ENCODE measurements at regions of chr16 and their contacts with region 1.

Region 1: DNA sequence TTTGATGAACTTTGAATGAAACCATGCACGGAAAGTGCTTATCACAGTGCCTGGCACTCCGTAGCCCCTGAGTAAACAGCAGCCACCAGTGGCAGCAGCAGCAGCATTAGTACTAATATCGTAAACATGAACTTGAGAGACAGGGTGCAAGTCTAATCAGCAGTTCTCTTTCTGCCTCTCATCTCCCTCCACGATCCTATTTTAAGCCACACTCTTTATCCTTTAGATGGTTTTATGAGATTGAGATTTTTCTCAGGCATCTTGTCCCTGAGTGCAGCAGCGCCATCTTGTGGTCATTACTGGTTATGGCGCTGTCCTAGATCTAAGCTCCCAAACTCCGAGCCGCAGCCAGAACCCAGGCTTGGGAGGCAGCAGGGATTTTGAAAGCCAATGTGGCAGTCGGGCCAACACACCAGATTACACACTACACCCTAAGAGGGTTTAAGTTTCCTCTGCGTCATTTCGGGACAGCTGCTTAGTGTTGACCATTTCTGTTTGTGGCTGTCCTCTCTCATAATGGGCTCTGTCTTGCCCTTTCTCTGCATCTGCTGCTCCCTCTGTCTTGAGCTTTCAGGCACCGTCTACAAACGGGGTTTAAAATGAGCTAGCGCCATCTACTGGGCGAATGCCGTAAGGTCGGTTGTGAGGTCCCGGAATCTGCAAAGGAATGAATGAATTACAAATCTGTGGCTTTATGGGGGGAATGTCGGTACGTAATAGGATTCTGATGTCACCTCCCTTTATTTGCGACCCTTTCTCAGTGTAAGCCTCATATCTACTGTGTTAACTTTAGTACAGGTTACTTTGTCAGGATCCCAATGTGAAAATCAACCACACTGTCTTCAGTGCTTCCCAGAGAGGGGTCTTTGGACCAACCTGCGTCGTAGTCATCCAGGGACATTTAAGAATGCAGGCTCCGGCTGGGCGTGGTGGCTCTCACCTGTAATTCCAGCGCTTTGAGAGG is 64.5 kb downstream of the CYLD start:
- DNase-seq: peak; percentile 85
- CTCF ChIP-seq: peak; percentile 96

Region 2: DNA sequence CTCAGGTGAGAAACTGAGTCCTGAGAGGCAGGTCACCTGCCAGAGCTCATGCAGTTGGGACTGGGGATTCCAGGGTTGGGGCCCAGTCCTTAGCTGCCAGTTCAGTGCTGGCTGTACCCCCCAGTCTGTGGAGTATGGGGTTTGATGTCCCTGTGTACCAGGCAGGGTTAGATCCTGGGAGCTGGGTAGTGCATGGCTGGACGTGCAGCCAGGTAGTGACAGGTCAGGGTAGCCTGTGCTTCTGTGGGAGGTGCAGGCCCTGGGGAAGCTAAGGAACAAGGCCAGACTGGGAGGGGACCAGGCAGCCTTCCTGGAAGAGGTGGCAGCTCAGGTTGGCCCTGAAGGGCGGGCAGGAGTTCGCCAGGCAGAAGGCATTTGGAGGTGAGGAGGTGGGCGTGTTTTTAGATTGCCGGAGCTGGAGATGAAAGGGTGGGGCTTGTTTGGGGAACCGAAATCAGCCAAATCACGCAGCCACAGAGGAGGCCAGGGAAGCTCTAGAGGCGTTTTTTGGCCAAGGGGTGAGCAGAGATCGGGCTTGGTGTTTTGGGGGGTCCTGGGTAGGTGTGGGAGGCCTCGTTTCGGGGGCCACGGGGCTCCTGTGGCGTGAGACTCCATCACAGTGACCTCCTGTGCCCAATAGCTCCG is 532.6 kb before region 1 on chr16:
- CTCF ChIA-PET with region 1: interaction called, 18 read pairs
- POLR2A ChIA-PET with region 1: no interaction called
- DNase-seq: peak; percentile 88
- CTCF ChIP-seq: no peak

Region 3: DNA sequence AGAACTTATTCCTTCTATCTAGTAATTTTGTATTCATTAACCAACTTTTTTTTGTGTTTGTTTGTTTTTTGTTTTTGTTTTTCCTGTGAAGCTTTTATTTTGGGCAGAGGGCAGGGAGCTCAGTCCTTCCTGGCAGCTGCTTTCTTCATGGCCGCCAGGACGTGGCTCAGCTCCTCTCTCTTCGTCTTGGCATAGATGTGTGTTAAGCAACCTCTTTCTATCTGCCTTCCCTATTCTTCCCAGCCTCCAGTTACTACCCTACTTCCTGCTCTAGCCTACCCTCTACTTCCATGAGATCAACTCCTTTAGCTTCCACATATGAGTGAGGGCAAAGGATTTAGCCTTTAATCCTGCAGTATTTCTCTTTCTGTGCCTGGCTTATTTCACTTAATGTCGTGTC is 429.4 kb before region 1 on chr16:
- CTCF ChIA-PET with region 1: interaction called, 17 read pairs
- POLR2A ChIA-PET with region 1: no interaction called
- DNase-seq: no peak
- CTCF ChIP-seq: no peak

Region 4: GRCh38 chr16:50611332-50611934 is 194.9 kb before region 1 on chr16:
- CTCF ChIA-PET with region 1: interaction called, 14 read pairs
- POLR2A ChIA-PET with region 1: no interaction called
- DNase-seq: no peak
- CTCF ChIP-seq: no peak

Region 5: DNA sequence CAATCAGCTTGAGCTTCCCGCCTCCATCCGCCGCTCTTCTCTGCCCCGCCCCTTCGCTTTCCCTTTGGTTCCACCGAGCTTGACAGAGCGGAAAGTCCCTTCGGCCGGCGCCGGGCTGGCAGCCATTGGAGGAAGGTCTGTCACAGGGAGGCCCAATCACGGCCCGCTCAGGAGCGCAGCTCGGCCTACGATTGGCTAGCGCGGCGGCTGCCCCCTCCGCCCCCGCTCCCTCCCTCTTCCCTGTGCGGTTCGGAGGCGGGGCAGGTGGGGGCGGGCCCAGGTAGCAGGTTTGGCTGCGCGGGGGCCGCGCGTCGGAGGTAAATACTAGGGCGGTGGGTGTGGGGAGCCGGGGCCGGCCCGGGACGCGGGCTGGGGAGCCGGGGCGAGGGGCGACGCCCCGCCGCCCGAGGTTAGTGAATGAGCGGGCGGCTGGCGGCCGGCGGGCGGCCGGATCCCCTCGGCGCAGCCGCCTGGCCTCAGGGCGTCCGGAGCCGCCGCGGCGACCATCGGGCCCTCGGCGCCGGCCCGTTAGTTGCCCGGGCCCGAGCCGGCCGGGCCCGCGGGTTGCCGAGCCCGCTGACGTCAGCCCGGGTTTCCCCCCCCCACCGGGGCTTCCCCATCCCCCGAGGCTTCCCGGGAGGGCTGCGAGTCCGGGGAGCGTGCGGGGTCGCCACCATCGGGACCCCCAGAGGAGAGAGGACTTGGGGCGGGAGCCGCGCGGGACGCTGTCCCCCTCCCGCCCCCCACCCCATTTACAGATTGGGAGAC is 64.4 kb before region 1 on chr16 and contains the start of gene CYLD:
- CTCF ChIA-PET with region 1: interaction called, 30 read pairs
- POLR2A ChIA-PET with region 1: interaction called, 3 read pairs
- DNase-seq: peak; percentile 98
- CTCF ChIP-seq: no peak

Region 6: DNA sequence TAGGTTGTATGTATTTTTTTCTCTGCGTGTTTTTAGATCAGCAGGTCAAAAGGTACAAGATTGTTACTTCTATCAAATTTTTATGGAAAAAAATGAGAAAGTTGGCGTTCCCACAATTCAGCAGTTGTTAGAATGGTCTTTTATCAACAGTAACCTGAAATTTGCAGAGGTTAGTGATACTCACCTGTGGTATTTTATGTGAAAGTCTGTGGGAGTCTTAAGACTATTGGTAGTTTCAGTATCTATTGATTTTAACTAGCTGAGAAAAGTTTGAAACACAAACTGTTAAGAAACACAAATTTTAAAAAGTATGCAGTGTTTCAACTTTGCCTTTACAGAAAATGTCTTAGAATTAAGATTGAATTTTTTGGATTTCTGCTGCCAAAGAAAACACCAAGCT is 14.9 kb before region 1 on chr16:
- CTCF ChIA-PET with region 1: interaction called, 99 read pairs
- POLR2A ChIA-PET with region 1: interaction called, 3 read pairs
- DNase-seq: no peak
- CTCF ChIP-seq: no peak

Region 7: DNA sequence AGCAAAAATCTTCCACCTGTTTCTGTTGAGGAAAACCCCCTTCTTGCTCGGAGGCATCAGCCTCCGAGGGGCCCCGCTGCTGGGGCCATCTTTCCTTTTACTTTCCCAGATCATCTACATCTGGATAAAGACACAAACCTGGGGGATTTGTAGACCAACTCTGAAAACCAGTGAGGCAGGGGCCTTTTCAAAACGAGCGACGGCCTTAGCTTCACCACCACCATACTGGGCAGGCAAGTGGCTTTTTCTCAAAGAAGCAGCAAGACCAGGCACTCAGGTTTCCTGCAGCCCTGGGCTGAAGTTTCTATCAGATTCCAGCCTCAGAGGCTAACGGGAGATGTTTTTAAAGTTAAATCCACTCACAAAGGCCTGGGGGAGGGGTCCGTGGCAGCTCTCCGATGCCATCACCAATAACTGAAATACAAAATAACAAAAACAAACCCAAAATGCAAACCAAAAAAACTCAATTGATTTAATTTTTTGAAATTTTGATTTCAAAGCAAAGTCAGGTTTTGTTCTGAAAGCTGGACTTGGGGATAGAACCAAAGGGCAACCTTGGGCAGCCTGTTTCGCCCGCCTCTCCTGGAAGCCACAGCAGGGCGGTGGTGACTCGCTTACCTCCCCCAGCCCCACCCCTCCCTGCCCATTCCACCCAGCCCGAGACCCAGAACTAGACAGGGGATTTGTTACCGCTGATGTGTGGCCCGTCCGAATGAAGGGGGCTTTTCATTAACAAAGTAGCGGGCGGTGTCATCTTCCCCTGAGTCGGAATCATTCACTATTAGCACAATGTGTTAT is 288.9 kb after region 1 on chr16:
- CTCF ChIA-PET with region 1: no interaction called
- POLR2A ChIA-PET with region 1: no interaction called
- DNase-seq: no peak
- CTCF ChIP-seq: no peak